ENCODE measurements at regions of chr3 and their contacts with region 1.

Region 1: GRCh38 chr3:120095226-120095978 is 1.2 kb upstream of the GSK3B start:
- DNase-seq: peak; percentile 94
- H3K4me3 Mint-ChIP-seq: no peak overlapping the region
- H3K27ac Mint-ChIP-seq: no peak overlapping the region
- H3K4me1 Mint-ChIP-seq: peaks cover 18% of the 10 kb centered on the region
- H3K27me3 Mint-ChIP-seq: no peaks in the 10 kb centered on the region

Region 2: GRCh38 chr3:119463171-119464169 is 631.9 kb before region 1 on chr3 and contains the start of gene TMEM39A:
- CTCF ChIA-PET with region 1: no interaction called
- POLR2A ChIA-PET with region 1: no interaction called
- intact Hi-C with region 1: loop called (anchors 1 kb)
- DNase-seq: peak; percentile 99
- H3K4me3 Mint-ChIP-seq: peak within 1 kb of the TSS; percentile 97
- H3K27ac Mint-ChIP-seq: peak within 1 kb of the TSS; percentile 98
- H3K4me1 Mint-ChIP-seq: peaks cover 41% of the 10 kb centered on the region
- H3K27me3 Mint-ChIP-seq: no peaks in the 10 kb centered on the region
- total RNA-seq, gene TMEM39A: 33.9 to 34.3 TPM

Region 3: GRCh38 chr3:119506631-119507030 is 588.8 kb before region 1 on chr3:
- CTCF ChIA-PET with region 1: no interaction called
- POLR2A ChIA-PET with region 1: no interaction called
- intact Hi-C with region 1: no loop called
- DNase-seq: no peak
- H3K4me3 Mint-ChIP-seq: peak overlapping the region; percentile 54
- H3K27ac Mint-ChIP-seq: peak overlapping the region; percentile 59
- H3K4me1 Mint-ChIP-seq: peaks cover 35% of the 10 kb centered on the region
- H3K27me3 Mint-ChIP-seq: no peaks in the 10 kb centered on the region

Region 4: GRCh38 chr3:119676771-119677640 is 418.4 kb before region 1 on chr3 and contains the start of gene COX17:
- CTCF ChIA-PET with region 1: no interaction called
- POLR2A ChIA-PET with region 1: no interaction called
- intact Hi-C with region 1: loop called (anchors 1 kb)
- DNase-seq: peak; percentile 98
- H3K4me3 Mint-ChIP-seq: peak within 1 kb of the TSS; percentile 95
- H3K27ac Mint-ChIP-seq: peak within 1 kb of the TSS; percentile 91
- H3K4me1 Mint-ChIP-seq: peaks cover 36% of the 10 kb centered on the region
- H3K27me3 Mint-ChIP-seq: no peaks in the 10 kb centered on the region
- total RNA-seq, gene COX17: 108 to 112 TPM

Region 5: GRCh38 chr3:119891944-119892721 is 203.3 kb before region 1 on chr3:
- CTCF ChIA-PET with region 1: interaction called, 8 read pairs
- POLR2A ChIA-PET with region 1: interaction called, 6 read pairs
- intact Hi-C with region 1: loop called (anchors 1 kb)
- DNase-seq: peak; percentile 35
- H3K4me3 Mint-ChIP-seq: no peak overlapping the region
- H3K27ac Mint-ChIP-seq: no peak overlapping the region
- H3K4me1 Mint-ChIP-seq: peaks cover 13% of the 10 kb centered on the region
- H3K27me3 Mint-ChIP-seq: no peaks in the 10 kb centered on the region

Region 6: GRCh38 chr3:120147072-120147871 is 51.9 kb after region 1 on chr3:
- CTCF ChIA-PET with region 1: interaction called, 5 read pairs
- POLR2A ChIA-PET with region 1: interaction called, 7 read pairs
- intact Hi-C with region 1: loop called (anchors 1 kb)
- DNase-seq: peak; percentile 53
- H3K4me3 Mint-ChIP-seq: no peak overlapping the region
- H3K27ac Mint-ChIP-seq: no peak overlapping the region
- H3K4me1 Mint-ChIP-seq: peaks cover 18% of the 10 kb centered on the region
- H3K27me3 Mint-ChIP-seq: no peaks in the 10 kb centered on the region

Region 7: DNA sequence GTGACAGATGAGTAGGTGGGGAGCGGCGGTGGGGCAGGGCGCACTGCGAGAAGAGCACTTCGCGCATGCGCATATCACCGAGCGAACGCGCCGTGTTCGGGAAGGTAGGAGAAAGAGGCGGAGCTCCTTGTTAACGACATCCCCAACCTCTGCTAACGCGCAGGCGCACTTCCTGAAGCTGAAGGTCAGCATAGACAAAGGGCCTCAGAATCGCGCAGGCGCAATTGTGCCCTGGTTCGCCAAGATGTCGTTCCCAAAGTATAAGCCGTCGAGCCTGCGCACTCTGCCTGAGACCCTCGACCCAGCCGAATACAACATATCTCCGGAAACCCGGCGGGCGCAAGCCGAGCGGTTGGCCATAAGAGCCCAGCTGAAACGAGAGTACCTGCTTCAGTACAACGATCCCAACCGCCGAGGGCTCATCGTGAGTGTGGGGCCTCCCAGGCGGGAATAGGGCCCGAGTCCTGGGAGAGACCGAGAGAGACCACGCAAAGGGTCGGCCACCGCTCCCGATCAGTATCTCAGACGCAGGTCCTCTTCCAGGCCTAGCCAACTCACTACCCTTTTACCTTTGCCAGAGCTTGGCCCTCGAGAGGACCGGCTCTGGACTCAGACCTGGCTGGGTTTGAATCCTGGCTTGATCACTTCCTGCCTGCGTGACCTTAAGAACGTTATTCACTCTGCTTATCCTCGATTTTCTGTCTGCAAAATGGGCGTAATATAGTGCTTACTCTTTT is 500.9 kb after region 1 on chr3 and contains the start of gene NDUFB4:
- CTCF ChIA-PET with region 1: no interaction called
- POLR2A ChIA-PET with region 1: interaction called, 8 read pairs
- intact Hi-C with region 1: loop called (anchors 2 kb)
- DNase-seq: peak; percentile 97
- H3K4me3 Mint-ChIP-seq: peak within 1 kb of the TSS; percentile 87
- H3K27ac Mint-ChIP-seq: peak within 1 kb of the TSS; percentile 91
- H3K4me1 Mint-ChIP-seq: peaks cover 10% of the 10 kb centered on the region
- H3K27me3 Mint-ChIP-seq: peaks cover 2% of the 10 kb centered on the region
- total RNA-seq, gene NDUFB4: 130 to 143 TPM

Region 8: DNA sequence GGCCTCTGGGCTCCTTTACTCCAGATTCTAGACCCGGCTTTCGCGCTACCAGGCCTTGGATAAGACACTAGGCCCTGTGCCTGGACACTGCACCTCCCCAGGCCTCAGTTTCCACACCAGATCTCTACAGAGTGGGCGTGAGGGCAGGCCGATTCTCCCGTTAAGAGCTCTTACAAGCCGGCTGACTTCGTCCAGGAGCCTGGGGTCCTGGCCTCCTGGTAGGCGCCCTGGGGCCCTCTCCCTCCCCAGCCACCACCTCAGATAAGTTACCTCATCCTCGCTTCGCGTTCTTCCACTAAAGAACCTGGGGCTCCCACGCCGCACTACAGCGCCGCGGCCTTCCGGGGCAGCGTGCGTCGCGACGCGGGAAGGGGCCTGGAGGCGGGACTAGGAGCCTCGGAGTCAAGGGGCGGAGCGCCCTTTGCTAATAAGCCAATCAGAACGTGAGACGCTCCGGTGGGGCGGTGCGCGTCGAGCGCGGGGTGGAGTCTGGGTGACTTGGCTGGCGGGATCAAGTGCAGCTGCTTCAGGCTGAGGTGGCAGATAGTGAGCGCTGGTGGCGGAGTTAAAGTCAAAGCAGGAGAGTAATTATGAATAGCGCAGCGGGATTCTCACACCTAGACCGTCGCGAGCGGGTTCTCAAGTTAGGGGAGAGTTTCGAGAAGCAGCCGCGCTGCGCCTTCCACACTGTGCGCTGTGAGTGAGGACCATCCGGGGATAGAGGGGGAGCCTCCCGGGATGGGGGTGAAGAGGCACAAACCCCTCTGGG is 1739.5 kb after region 1 on chr3 and contains the starts of genes EAF2 and IQCB1:
- CTCF ChIA-PET with region 1: no interaction called
- POLR2A ChIA-PET with region 1: no interaction called
- intact Hi-C with region 1: loop called (anchors 2 kb)
- DNase-seq: peak; percentile 98
- H3K4me3 Mint-ChIP-seq: peak within 1 kb of the TSS; percentile 98
- H3K27ac Mint-ChIP-seq: peak within 1 kb of the TSS; percentile 84
- H3K4me1 Mint-ChIP-seq: peaks cover 37% of the 10 kb centered on the region
- H3K27me3 Mint-ChIP-seq: no peaks in the 10 kb centered on the region
- total RNA-seq, gene EAF2: 14.4 to 14.8 TPM
- total RNA-seq, gene IQCB1: 36.8 to 37.3 TPM